Ascending aorta (tissue), 2 donors: ENCODE measurements at regions of chr2 and their contacts with region 1.

Region 1: DNA sequence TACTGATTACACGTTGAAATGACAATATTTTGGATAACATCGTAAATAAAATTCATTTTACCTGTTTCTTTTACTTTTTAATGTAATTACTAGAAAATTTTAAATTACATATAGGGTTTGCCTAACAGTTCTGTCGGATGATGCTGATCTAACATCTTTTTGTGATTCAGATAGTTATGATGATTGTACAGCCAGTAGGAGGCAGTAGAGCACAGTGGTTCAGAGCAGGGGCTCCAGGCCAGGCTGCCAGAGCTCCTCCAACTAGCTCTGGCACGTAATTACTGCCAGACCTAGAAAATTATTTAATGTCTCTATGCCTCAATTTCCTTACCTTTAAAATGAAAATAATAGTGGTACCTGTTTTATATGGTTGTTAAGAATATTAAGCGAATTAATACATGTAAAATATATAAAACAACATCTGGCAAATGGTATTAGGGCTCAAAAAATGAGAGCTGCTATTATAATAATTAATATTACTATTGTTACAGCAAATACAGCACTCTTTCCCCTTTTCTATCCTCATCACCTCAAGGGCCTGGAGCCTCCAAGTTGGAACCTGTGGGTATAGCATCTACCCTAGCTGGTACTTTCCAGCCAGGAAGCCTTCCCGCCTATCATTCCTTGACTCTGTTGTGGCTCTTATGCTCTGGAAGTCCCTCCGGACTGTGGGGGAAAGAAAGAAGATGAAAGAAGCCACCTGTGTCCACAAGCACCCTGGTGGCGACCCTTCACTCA is 47.7 kb upstream of the PLA2R1 start:
- DNase-seq: peak in 1 of 2 donors; percentile 82
- H3K4me3 ChIP-seq: no peak overlapping the region
- H3K27ac ChIP-seq: no peak overlapping the region
- H3K4me1 ChIP-seq: no peaks in the 10 kb centered on the region
- H3K27me3 ChIP-seq: no peaks in the 10 kb centered on the region
- CTCF ChIP-seq: peak; percentile 76 to 86 (median 81)

Region 2: DNA sequence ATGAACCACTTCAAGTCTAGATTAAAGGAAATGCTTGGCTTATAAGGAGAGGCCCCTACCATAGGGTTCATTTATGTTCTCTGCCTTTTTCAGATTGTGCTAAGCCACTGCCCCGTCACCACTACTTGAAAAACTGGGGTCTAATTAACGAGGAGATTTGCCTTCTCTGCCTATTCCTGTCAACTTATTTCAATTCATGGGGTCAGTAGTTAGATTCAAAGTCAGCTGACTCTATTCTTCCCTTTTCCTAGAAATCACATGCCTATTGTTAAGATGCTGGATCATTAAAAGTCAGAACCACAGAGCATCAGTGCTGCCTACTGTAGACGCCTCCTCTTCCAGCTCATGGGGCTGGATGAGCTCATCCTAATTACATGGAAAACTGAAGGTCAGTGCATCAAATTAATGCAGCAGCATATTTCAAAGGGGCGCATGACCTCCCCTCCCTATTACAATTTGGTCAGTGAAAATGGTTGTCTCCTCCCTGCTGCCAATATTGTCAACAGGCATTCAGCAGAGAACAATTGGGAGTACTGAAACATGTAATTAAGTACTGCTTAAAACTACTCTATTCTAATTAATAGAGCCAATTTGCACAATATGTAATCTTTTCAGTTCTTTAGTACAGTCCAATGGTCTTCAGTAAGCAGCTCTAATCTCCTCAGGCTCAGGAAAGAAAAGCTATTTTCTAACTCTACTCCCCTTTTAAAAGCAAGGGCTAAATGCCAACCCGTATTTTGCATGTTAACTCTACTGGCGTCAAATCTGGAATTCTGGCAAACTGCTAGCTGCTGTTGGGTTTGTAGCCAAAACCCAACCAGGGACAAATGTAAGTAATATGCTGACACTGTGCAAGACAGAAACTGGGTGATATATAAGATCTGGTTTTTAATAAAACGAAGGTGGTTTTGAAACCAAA is 207.3 kb after region 1 on chr2:
- intact Hi-C with region 1: loop called (anchors 5 kb)
- DNase-seq: no peak
- H3K4me3 ChIP-seq: no peak overlapping the region
- H3K27ac ChIP-seq: peak overlapping the region; percentile 32 to 46
- H3K4me1 ChIP-seq: peaks cover 5 to 28% of the 10 kb centered on the region in 2 donors
- H3K27me3 ChIP-seq: no peaks in the 10 kb centered on the region
- CTCF ChIP-seq: no peak

Region 3: GRCh38 chr2:161063157-161063954 is 953.3 kb after region 1 on chr2:
- intact Hi-C with region 1: loop called (anchors 5 kb)
- DNase-seq: peak; percentile 30 to 88
- H3K4me3 ChIP-seq: peak overlapping the region in 1 of 2 donors; percentile 25
- H3K27ac ChIP-seq: no peak overlapping the region
- H3K4me1 ChIP-seq: peaks cover 0 to 3% of the 10 kb centered on the region in 2 donors
- H3K27me3 ChIP-seq: no peaks in the 10 kb centered on the region
- CTCF ChIP-seq: peak; percentile 66 to 93 (median 91)